Posterior cingulate gyrus (tissue), 11 donors: ENCODE measurements at regions of chr2 and their contacts with region 1.

Region 1: DNA sequence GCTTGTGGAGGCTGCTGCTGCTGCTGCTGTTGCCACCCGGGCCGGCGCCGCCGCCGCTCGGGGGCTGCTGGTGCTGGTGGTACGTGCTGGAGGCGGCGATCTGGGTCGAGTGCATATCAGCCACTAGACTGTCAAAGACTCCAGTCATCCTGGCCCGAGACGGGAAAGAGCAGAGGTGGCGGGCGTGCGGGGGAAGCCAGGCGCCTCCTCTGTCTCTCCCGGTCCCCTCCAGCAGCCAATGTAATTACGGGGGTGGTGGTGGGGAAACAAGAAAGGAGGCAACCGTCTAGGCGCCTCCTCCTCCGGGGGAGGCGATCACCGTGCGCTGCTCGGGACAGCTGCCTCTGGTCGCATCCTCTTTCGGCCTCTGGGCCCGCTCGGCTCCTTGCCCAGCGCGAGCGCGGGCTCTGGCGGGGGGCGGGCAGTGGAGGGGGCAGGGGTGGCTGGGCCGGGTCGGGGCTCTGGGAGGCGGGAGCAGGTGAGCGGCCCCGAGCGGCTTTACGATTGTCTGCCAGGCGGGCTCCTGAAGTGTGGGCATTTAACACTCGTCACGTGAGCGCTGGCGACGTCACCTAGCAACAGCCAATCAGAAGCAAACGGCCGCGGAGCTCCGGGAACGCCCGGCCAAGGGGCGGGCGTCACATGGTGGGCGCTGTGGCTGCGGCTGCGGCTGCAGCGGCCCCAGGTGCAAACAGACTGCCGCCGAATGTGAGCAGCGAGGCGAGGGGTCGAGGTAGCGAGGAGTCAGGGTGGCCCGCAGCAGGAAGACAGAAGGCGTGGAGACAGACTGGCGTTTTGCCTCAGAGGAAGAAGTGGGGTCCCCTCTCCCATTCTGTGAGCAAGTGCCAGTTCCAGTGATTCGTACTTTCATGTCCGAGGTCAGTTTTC is at the start of gene DLX2:
- DNase-seq: peak; percentile 56 to 95 (median 71)

Region 2: DNA sequence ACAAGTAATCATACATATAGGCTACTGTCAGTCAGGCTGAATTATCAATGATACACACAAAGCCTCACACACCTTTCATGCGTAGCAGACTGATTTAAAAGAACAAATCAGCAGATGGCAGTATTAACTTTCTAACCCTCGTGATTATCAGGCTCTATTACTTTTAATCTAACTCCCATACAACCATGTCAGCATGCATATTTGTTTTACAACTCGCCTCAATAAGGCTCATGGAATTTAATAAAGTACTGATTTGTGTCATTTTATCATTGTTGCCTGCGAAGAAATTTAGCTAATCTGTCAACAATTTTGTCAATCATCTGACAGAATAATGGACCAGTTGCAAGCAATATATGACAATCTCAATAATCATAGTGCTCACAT is 291.4 kb before region 1 on chr2:
- intact Hi-C with region 1: loop called (anchors 5 kb)
- DNase-seq: no peak